Heart right ventricle (tissue), 16 donors: ENCODE measurements at regions of chr20 and their contacts with region 1.

Region 1: DNA sequence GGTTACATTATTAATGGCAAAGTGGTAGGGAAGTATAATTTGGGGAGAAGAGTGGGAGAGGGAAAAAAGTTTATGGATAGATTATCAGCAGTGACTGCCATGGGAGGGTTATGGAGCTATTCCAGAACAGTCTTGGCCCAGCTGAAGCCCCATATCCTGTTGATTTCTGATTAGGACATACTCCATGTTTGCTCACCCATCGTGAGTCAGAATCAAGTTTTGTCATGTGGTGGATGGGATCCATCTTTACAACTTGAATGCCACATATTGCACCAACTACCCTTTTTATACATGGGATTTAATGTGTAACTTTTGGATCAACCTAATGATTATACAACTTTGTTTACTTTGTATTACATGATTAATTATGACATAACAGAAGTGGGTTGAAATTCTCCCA is 217.0 kb downstream of the HAO1 start:
- DNase-seq: no peak
- ATAC-seq: peak in 2 of 8 donors; percentile 25 to 63
- H3K4me3 ChIP-seq: no peak overlapping the region
- H3K27ac ChIP-seq: peak overlapping the region in 6 of 10 donors; percentile 2 to 61 (median 38)
- H3K4me1 ChIP-seq: peaks cover 0 to 23% (median 0%) of the 10 kb centered on the region in 9 donors
- H3K27me3 ChIP-seq: no peaks in the 10 kb centered on the region
- CTCF ChIP-seq: no peak

Region 2: GRCh38 chr20:7627734-7628663 is 95.3 kb before region 1 on chr20:
- intact Hi-C with region 1: loop called in 1 of 10 experiments (anchors 5 kb)
- DNase-seq: no peak
- ATAC-seq: peak in 1 of 8 donors; percentile 53
- H3K4me3 ChIP-seq: no peak overlapping the region
- H3K27ac ChIP-seq: no peak overlapping the region
- H3K4me1 ChIP-seq: peaks cover 0 to 24% (median 0%) of the 10 kb centered on the region in 9 donors
- H3K27me3 ChIP-seq: no peaks in the 10 kb centered on the region
- CTCF ChIP-seq: no peak